ENCODE measurements at regions of chr3 and their contacts with region 1.

Region 1: GRCh38 chr3:56930706-56931105 is 129.0 kb upstream of the ARHGEF3 start:
- DNase-seq: no peak
- H3K4me3 ChIP-seq: no peak overlapping the region
- H3K27ac ChIP-seq: no peak overlapping the region
- H3K4me1 ChIP-seq: no peaks in the 10 kb centered on the region
- H3K27me3 ChIP-seq: no peaks in the 10 kb centered on the region
- CTCF ChIP-seq: no peak
- POLR2A ChIP-seq: no peak

Region 2: DNA sequence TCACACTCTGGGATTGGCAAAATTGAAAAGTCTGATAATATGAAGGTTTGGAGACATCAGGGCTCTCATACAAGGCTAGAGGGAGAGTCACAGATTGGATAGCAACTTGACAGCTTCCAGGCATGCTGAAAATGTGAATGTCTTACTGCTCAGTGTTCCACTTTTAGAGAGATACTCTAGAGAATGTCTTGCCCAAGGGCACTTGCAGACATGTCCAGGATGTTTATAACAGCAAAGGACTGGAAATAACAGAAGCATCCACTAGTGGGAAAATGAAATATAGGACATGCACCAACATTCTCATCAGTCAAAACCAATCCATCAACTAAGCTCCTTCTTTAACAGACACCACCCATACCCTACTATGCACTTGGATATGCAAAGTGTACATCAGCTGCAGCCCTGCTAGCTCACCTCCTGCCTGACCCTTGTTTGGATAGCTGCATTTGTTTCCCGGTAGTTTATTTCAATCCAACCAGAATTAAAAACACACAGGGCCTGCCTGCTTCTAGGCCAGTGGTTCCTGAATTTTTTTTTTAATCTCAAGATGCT is 27.4 kb before region 1 on chr3:
- intact Hi-C with region 1: loop called (anchors 2 kb)
- DNase-seq: no peak
- H3K4me3 ChIP-seq: no peak overlapping the region
- H3K27ac ChIP-seq: no peak overlapping the region
- H3K4me1 ChIP-seq: no peaks in the 10 kb centered on the region
- H3K27me3 ChIP-seq: no peaks in the 10 kb centered on the region
- CTCF ChIP-seq: no peak
- POLR2A ChIP-seq: no peak

Region 3: DNA sequence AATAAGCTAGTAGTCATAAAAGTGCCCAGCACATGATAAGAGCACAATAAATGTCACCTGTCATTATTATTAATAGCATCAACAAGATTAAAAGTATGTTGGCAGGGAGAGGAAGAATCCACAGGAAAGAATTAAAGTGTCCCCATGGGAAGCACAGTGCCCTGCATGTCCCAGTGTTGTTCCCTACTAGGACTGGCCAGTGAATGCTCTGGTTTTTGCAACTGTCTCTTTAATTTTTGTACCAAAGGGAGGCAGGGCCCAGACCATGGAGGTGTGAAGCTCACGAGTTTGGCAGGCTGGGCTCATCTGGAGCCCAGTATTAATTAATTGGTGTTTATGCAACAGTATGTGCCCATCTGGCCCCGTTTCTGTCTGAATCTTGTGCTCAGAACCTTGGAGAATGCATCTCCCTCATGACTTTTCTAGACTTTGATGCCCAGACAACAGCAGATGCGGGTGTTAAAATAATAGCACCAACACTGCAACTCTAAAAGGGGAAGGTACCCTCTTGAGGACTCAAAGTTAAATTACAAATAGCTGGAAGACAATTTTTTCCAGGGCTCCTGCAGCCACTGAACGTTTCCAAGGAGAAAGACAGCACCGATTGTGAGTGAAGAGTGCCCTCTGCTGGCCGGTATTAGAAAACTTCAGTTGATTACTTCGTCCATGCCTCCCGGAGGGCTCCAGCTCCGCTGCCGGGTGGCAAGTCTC is 57.9 kb after region 1 on chr3:
- intact Hi-C with region 1: no loop called
- DNase-seq: peak; percentile 58 to 81
- H3K4me3 ChIP-seq: no peak overlapping the region
- H3K27ac ChIP-seq: no peak overlapping the region
- H3K4me1 ChIP-seq: no peaks in the 10 kb centered on the region
- H3K27me3 ChIP-seq: no peaks in the 10 kb centered on the region
- CTCF ChIP-seq: peak; percentile 78 to 83 (median 82)
- POLR2A ChIP-seq: no peak